ENCODE measurements at regions of chr3 and their contacts with region 1.

Region 1: GRCh38 chr3:38651154-38651789 is 1.8 kb upstream of the SCN5A start:
- DNase-seq: peak; percentile 63 to 78 (median 75)
- H3K4me3 ChIP-seq: peak overlapping the region in 2 of 7 experiments; percentile 25 to 54
- H3K27ac ChIP-seq: no peak overlapping the region
- H3K4me1 ChIP-seq: peaks cover 0 to 19% (median 16%) of the 10 kb centered on the region in 4 experiments
- H3K27me3 ChIP-seq: peaks cover 4 to 51% (median 35%) of the 10 kb centered on the region in 5 experiments

Region 2: DNA sequence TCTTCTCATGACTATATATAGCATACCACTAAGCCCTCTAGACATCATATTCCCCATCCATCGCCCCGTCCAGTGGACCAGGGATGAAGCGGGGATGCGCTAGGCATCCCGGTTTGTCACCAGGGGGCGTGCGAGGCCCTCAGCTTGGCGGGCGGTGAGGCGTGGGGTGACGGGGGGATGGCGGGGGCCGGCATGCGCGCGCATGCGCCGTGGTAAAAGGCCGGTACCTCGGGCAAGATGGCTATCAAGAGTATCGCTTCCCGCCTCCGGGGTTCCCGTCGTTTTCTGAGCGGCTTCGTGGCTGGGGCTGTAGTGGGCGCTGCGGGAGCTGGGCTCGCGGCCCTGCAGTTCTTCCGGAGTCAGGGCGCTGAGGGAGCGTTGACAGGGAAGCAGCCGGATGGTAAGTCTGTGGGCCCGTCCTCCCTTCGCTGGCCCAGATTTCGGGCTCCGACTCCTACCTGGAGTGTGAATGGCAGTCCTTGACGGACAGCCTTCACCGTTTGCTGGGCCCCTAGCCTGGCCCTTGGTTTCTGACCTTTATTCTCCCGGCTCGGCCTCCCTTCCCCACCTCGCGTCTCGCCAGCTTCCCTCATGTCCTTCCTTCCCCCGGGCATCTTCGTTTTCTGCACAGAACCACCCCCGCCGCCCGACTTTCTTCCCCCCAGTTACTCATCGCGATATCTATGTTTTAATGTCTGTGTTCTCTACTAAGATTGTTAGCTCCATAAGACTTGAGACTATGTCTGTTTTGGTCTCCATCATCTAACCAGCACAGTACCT is 155.0 kb before region 1 on chr3 and contains the start of gene EXOG:
- CTCF ChIA-PET with region 1: interaction called, 11 read pairs
- POLR2A ChIA-PET with region 1: no interaction called
- DNase-seq: peak; percentile 93 to 95 (median 93)
- H3K4me3 ChIP-seq: peak within 1 kb of the TSS; percentile 46 to 98 (median 85)
- H3K27ac ChIP-seq: peak within 1 kb of the TSS in 1 of 2 experiments; percentile 72
- H3K4me1 ChIP-seq: peaks cover 0 to 10% (median 6%) of the 10 kb centered on the region in 4 experiments
- H3K27me3 ChIP-seq: no peaks in the 10 kb centered on the region

Region 3: GRCh38 chr3:38843898-38844297 is 192.6 kb after region 1 on chr3:
- CTCF ChIA-PET with region 1: interaction called, 38 read pairs
- POLR2A ChIA-PET with region 1: no interaction called
- DNase-seq: peak; percentile 52 to 75 (median 69)
- H3K4me3 ChIP-seq: no peak overlapping the region
- H3K27ac ChIP-seq: no peak overlapping the region
- H3K4me1 ChIP-seq: no peaks in the 10 kb centered on the region
- H3K27me3 ChIP-seq: peaks cover 0 to 2% (median 0%) of the 10 kb centered on the region in 5 experiments

Measured in common myeloid progenitor, CD34-positive (primary cell).